Endothelial cell of umbilical vein (primary cell): ENCODE measurements at regions of chr3 and their contacts with region 1.

Region 1: DNA sequence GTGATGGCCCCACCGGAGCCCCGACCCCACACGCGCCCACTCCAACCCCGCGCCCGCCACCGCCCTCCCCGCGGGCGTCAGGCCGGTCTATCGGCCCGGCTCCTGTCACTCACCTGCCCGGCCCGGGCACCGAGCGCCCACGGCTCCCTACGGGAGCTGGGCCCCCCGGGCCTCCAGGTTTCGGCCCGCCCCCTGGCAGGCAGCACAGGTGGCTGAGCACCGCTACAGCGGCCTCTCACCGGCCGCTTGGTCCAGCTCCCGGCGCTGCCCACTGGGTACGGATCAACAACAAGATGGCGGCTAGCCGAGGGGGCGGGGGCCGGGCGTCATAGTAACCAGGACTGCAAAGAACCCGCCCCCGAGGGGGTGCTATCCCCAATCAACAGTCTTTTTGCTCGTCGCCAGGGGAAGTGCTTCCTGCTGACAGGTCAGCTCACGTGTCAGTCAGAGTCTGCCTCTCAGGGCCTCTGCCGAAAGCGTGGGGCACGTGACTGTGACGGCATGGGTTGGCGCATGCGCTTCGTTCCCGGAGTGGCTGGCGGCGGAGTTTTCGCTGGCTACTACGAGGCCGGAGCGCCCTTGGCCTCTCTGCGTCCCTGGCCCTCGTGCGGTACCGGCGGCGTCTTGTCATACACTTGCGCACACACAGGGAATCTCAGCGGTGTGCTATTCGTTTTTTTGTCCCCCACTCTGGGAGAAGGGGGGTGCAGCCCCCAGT is at the start of gene IP6K1:
- DNase-seq: peak; percentile 100
- H3K4me3 ChIP-seq: peak within 1 kb of the TSS; percentile 74 to 85 (median 80)
- H3K27ac ChIP-seq: peak within 1 kb of the TSS; percentile 38
- H3K4me1 ChIP-seq: peaks cover 11% of the 10 kb centered on the region
- H3K27me3 ChIP-seq: no peaks in the 10 kb centered on the region
- CTCF ChIP-seq: no peak
- POLR2A ChIP-seq: peak; percentile 82
- total RNA-seq, gene IP6K1: 54.6 and 60.8 TPM in 2 replicates

Region 2: GRCh38 chr3:49769286-49769915 is 17.0 kb before region 1 on chr3:
- CTCF ChIA-PET with region 1: interaction called, 4 read pairs
- POLR2A ChIA-PET with region 1: interaction called, 12 read pairs
- dilution Hi-C with region 1: no loop called
- intact Hi-C with region 1: no loop called
- DNase-seq: no peak
- H3K4me3 ChIP-seq: no peak overlapping the region
- H3K27ac ChIP-seq: no peak overlapping the region
- H3K4me1 ChIP-seq: no peaks in the 10 kb centered on the region
- H3K27me3 ChIP-seq: no peaks in the 10 kb centered on the region
- CTCF ChIP-seq: no peak
- POLR2A ChIP-seq: no peak